ENCODE measurements at regions of chr1 and their contacts with region 1.

Region 1: DNA sequence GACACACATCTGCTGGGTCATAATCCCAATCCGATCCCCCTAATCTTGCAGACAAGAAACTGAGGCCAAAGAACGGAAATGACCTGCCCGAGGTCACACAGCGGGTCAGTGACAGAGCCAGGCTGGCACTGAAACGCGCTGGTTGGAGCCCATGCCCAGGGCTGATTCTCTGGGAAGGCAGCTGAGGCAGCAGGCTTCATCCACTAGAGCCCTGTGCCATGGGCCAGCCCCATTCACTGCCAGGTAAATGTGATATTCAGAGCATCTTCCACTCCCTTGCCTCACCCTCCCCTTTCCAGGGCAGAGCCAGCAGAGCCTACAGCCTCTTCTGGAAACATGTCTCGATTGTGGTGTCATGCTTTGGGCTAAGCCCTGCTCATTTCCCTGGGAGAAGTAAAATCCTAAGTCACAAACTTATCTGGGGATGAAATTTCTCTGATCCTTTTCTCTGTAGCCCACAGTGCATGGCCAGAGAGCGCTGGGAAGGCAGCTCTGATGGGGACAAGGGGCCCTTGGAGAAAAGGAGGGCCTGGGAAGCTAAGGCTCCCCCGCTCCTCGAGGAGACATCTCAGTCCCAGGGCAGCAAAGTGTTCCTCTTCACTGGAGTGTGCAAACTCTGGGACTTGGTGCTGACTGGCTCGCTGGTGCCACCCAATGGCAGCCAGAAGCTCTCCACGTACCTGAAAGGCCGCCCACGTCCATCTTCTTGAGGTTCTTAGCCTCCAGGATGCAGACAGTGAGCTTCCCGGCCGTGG is 110.4 kb downstream of the SYT2 start:
- DNase-seq: peak; percentile 72
- H3K4me3 ChIP-seq: no peak overlapping the region
- H3K27ac ChIP-seq: no peak overlapping the region
- H3K4me1 ChIP-seq: no peaks in the 10 kb centered on the region
- H3K27me3 ChIP-seq: no peaks in the 10 kb centered on the region
- CTCF ChIP-seq: peak; percentile 87 to 93
- POLR2A ChIP-seq: no peak

Region 2: GRCh38 chr1:202348509-202349205 is 251.2 kb before region 1 on chr1 and contains the start of gene PPP1R12B:
- CTCF ChIA-PET with region 1: interaction called, 3 read pairs
- POLR2A ChIA-PET with region 1: no interaction called
- dilution Hi-C with region 1: no loop called
- intact Hi-C with region 1: loop called (anchors 1 kb)
- DNase-seq: peak; percentile 99
- H3K4me3 ChIP-seq: peak within 1 kb of the TSS; percentile 44 to 75 (median 55)
- H3K27ac ChIP-seq: peak within 1 kb of the TSS; percentile 52
- H3K4me1 ChIP-seq: peaks cover 7% of the 10 kb centered on the region
- H3K27me3 ChIP-seq: no peaks in the 10 kb centered on the region
- CTCF ChIP-seq: no peak
- POLR2A ChIP-seq: peak; percentile 71
- total RNA-seq, gene PPP1R12B: 11.5 and 11.6 TPM in 2 replicates

Region 3: DNA sequence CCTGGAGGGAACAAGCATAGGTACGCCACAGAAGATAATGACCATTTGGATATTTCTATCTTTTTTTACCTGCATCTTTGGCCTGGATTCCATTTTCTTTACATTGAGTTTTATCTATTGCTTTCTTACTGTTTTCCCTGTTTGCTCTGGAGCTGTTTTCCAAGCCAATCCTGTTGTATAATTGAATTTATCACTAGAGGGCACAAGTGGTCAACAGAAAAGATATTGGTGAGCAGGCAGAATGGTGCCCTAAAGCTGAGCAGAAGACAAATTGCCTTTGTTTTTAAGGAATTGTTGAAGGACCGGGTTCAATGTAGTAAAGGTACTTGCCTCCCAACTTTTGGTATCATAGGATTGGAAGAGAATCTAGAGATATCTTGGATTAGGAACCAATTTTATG is 98.6 kb before region 1 on chr1:
- CTCF ChIA-PET with region 1: interaction called, 61 read pairs
- POLR2A ChIA-PET with region 1: no interaction called
- dilution Hi-C with region 1: no loop called
- intact Hi-C with region 1: loop called (anchors 1 kb)
- DNase-seq: peak; percentile 32
- H3K4me3 ChIP-seq: no peak overlapping the region
- H3K27ac ChIP-seq: no peak overlapping the region
- H3K4me1 ChIP-seq: no peaks in the 10 kb centered on the region
- H3K27me3 ChIP-seq: no peaks in the 10 kb centered on the region
- CTCF ChIP-seq: peak in 1 of 2 donors; percentile 12
- POLR2A ChIP-seq: no peak

Region 4: DNA sequence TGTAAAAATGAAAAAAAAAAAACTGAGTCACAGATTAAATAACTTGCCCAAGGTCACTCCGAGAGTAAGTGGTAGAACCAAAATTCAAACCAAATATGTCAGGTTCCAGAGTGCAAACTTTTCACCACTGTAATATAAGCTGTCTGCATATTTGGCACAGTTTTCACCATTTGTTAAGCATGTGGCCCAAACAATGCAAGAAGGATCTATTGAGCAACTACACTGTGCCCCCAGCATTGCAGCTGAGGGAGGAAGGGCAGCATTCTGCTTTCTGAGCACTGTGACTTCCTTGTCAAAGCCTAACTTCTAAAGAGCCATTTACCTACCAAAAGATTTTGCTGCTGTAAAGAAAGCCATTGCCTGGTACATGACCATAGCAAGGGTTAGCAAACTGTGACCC is 23.0 kb before region 1 on chr1:
- CTCF ChIA-PET with region 1: interaction called, 21 read pairs
- POLR2A ChIA-PET with region 1: no interaction called
- dilution Hi-C with region 1: no loop called
- intact Hi-C with region 1: no loop called
- DNase-seq: peak; percentile 40
- H3K4me3 ChIP-seq: no peak overlapping the region
- H3K27ac ChIP-seq: no peak overlapping the region
- H3K4me1 ChIP-seq: peaks cover 4% of the 10 kb centered on the region
- H3K27me3 ChIP-seq: no peaks in the 10 kb centered on the region
- CTCF ChIP-seq: no peak
- POLR2A ChIP-seq: no peak

Region 5: DNA sequence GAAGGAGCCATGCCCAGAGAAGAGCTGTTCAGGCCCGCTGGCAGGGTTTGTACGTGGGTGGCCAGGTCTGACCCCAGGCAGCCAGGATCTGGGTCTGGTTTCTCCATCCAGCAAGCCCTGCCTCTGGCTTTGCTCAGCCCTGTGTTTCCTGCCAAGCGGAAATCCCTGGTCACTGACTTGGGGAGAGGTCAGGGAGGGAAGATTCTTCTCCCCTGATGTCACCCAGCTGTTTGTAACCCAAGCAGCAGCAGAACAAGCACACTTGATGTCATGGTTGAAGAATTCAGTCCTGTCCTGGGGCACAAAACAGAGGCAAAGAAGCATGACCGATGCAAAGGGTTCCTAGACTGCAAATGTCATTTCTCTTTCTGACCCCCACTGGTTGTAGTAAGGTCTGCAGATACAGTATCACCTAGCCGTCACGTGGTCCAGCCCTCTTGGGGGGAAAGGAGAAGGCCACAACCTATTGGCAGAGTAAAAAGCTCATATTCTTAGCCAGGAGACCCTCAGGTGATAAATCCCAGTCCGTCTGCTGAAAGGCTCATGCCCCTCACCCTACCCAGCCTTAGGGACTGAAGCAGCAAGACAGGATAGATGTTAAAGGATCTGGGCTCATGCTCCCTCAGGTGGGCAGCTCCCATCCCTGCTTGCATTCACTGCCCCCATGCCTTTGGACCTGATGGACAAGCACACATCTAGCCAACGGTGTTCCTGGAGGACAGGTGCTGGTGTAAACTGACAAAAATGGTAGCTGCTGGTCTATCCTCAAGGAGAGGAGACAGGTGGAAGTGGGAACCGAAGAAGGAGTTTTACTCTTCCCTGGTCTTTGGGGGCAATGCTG is 10.4 kb before region 1 on chr1:
- CTCF ChIA-PET with region 1: interaction called, 19 read pairs
- POLR2A ChIA-PET with region 1: no interaction called
- dilution Hi-C with region 1: no loop called
- intact Hi-C with region 1: no loop called
- DNase-seq: peak; percentile 91
- H3K4me3 ChIP-seq: no peak overlapping the region
- H3K27ac ChIP-seq: peak overlapping the region; percentile 92
- H3K4me1 ChIP-seq: peaks cover 51% of the 10 kb centered on the region
- H3K27me3 ChIP-seq: no peaks in the 10 kb centered on the region
- CTCF ChIP-seq: no peak
- POLR2A ChIP-seq: peak; percentile 22

Measured in endothelial cell of umbilical vein (primary cell).